Pancreas (tissue), 10 donors: ENCODE measurements at regions of chr19 and their contacts with region 1.

Region 1: DNA sequence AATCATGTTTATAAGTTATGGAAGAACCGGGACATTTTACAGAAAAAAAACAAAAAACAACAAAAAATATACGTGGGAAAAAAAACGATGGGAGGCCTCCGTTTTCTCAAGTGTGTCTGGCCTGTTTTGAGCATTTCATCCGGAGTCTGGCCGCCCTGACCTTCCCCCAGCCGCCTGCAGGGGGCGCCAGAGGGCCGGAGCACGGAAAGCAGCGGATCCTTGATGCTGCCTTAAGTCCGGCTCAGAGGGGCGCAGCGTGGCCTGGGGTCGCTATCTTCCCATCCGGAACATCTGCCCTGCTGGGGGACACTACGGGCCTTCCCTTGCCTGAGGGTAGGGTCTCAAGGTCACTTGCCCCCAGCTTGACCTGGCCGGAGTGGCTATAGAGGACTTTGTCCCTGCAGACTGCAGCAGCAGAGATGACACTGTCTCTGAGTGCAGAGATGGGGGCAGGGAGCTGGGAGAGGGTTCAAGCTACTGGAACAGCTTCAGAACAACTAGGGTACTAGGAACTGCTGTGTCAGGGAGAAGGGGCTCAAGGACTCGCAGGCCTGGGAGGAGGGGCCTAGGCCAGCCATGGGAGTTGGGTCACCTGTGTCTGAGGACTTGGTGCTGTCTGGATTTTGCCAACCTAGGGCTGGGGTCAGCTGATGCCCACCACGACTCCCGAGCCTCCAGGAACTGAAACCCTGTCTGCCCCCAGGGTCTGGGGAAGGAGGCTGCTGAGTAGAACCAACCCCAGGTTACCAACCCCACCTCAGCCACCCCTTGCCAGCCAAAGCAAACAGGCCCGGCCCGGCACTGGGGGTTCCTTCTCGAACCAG is 1.8 kb upstream of the APOE start:
- DNase-seq: peak; percentile 46 to 94 (median 76)
- ATAC-seq: peak; percentile 82 to 87 (median 83)
- H3K4me3 ChIP-seq: no peak overlapping the region
- H3K27ac ChIP-seq: no peak overlapping the region
- H3K4me1 ChIP-seq: peaks cover 4 to 10% (median 5%) of the 10 kb centered on the region in 3 donors
- H3K27me3 ChIP-seq: no peaks in the 10 kb centered on the region
- CTCF ChIP-seq: peak; percentile 97 to 99 (median 98)

Region 2: DNA sequence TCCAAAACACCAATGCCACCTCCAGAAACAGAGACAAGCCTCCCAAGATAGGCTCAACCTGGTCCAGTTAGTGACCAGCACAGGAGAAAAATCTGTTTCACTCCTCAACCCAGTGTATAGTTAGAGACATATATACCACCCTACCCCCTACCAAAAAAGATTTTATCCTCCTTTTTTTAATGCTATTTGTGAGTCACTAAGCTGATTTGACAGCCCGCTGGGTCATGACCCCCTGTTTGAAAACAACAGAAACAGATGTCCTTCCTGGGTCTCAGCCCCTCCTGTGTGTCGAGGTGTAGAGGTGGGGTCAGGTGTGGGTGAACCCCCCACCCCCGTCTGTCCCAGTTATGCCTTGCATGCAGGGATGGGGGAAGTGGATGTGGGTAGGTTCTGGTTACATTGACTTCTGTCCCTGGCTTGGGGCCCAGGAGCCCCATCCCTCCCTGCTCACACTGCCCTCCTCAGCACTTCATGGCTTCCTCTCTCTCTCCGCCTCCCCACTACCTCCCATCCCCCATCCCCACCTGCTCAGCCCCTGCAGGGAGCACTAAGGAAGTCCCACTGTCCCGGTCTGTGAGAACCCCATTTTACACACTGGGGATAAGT is 26.8 kb before region 1 on chr19:
- intact Hi-C with region 1: no loop called
- DNase-seq: no peak
- ATAC-seq: no peak
- H3K4me3 ChIP-seq: no peak overlapping the region
- H3K27ac ChIP-seq: peak overlapping the region in 1 of 4 donors; percentile 10
- H3K4me1 ChIP-seq: no peaks in the 10 kb centered on the region
- H3K27me3 ChIP-seq: no peaks in the 10 kb centered on the region
- CTCF ChIP-seq: no peak

Region 3: DNA sequence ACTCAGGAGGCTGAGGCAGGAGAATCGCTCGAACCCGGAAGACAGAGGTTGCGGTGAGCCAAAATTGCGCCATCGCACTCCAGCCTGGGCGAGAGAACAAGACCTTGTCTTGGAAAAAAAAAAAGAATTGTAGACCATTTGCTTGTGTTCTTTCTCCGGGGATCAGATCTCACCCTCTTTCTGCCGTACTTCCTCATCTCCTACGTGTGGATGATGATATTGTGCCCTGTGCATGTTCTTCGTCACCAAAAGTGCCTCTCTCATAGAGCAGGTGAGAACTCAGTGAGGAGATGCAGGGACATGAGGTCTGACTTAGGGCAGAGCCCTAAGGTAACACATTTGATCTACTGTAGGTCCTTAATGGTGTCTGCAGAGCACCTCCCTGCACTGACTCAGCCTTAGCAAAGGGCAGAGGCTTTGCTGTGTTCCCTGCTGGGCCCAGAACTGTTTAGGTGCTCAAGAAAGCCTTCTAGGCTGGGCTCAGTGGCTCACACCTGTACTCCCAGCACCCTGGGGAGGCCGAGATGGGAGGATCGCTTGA is 43.3 kb after region 1 on chr19:
- intact Hi-C with region 1: loop called in 2 of 3 experiments (anchors 5 kb)
- DNase-seq: no peak
- ATAC-seq: no peak
- H3K4me3 ChIP-seq: no peak overlapping the region
- H3K27ac ChIP-seq: peak overlapping the region in 1 of 4 donors; percentile 27
- H3K4me1 ChIP-seq: peaks cover 0 to 9% (median 4%) of the 10 kb centered on the region in 3 donors
- H3K27me3 ChIP-seq: no peaks in the 10 kb centered on the region
- CTCF ChIP-seq: no peak

Region 4: GRCh38 chr19:44954824-44955586 is 51.2 kb after region 1 on chr19 and contains the start of gene CLPTM1:
- intact Hi-C with region 1: loop called in 1 of 3 experiments (anchors 5 kb)
- DNase-seq: peak; percentile 96 to 99 (median 98)
- ATAC-seq: peak; percentile 92 to 97 (median 96)
- H3K4me3 ChIP-seq: peak within 1 kb of the TSS; percentile 91 to 99 (median 96)
- H3K27ac ChIP-seq: peak within 1 kb of the TSS; percentile 53 to 96 (median 74)
- H3K4me1 ChIP-seq: peaks cover 9 to 20% (median 17%) of the 10 kb centered on the region in 3 donors
- H3K27me3 ChIP-seq: no peaks in the 10 kb centered on the region
- CTCF ChIP-seq: no peak
- total RNA-seq, gene CLPTM1: 56.4 to 73.6 (median 63.8) TPM

Region 5: DNA sequence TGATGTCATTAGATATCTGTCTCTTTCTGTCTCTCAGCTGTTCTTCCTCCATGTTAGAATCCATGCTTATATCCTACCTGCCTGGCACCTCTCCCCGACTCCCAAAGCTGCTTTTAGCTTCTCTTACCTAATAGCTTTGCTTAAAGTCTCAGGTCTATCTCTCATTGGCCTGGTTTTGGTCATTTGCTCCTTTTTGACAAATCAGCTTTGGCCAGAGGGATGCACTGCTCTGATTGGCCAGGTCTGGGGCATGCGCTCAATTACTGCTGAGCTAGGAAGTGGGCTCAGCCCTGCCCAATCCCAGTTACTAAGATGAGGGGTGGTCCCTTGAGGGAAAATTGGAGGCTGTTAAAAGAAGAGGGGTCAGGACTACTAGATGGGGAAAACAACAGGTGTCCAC is 123.6 kb after region 1 on chr19:
- intact Hi-C with region 1: no loop called
- DNase-seq: no peak
- ATAC-seq: no peak
- H3K4me3 ChIP-seq: no peak overlapping the region
- H3K27ac ChIP-seq: no peak overlapping the region
- H3K4me1 ChIP-seq: no peaks in the 10 kb centered on the region
- H3K27me3 ChIP-seq: no peaks in the 10 kb centered on the region
- CTCF ChIP-seq: no peak

Region 6: DNA sequence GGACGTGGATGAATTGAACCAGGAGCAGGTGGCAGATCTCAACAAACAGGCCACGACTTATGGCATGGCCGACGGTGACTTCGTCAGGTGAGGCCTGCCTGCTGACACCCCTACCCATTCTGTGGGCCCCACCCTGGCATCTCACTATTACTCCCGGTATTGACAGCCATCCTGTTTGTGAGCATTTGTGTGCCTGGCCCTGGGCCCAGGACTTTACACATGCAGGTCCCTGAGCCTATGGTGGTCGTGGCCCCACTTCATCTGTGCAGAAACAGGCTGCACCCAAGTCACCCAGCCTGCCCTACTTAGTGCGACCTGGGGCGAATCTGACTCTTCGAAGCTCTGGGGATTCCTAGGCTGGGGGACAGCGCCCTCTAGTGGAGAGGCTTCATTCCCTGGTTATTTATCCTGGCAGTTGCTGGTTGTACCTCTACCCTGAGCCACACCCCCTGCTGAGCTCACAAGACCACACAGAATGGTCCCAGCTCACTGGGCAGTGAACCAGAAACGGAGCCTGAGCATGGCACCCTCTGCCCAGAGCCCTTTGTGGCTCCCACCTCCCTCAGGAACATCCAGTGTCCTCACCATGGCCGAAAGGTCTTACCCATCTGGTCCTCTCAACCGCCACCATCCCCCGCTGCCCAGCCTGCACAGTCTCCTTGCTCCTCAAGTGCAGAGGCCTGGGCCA is 155.6 kb after region 1 on chr19:
- intact Hi-C with region 1: loop called in 1 of 3 experiments (anchors 10 kb)
- DNase-seq: peak in 5 of 6 donors; percentile 56 to 88 (median 76)
- ATAC-seq: peak; percentile 67 to 90 (median 84)
- H3K4me3 ChIP-seq: no peak overlapping the region
- H3K27ac ChIP-seq: no peak overlapping the region
- H3K4me1 ChIP-seq: no peaks in the 10 kb centered on the region
- H3K27me3 ChIP-seq: no peaks in the 10 kb centered on the region
- CTCF ChIP-seq: peak; percentile 84 to 89 (median 86)